ENCODE measurements at regions of chr6 and their contacts with region 1.

Region 1: GRCh38 chr6:100105138-100105753 is 111.2 kb upstream of the MCHR2 start:
- DNase-seq: no peak
- H3K4me3 ChIP-seq: no peak overlapping the region
- H3K27ac ChIP-seq: no peak overlapping the region
- H3K4me1 ChIP-seq: no peaks in the 10 kb centered on the region
- H3K27me3 ChIP-seq: no peaks in the 10 kb centered on the region
- CTCF ChIP-seq: no peak

Region 2: DNA sequence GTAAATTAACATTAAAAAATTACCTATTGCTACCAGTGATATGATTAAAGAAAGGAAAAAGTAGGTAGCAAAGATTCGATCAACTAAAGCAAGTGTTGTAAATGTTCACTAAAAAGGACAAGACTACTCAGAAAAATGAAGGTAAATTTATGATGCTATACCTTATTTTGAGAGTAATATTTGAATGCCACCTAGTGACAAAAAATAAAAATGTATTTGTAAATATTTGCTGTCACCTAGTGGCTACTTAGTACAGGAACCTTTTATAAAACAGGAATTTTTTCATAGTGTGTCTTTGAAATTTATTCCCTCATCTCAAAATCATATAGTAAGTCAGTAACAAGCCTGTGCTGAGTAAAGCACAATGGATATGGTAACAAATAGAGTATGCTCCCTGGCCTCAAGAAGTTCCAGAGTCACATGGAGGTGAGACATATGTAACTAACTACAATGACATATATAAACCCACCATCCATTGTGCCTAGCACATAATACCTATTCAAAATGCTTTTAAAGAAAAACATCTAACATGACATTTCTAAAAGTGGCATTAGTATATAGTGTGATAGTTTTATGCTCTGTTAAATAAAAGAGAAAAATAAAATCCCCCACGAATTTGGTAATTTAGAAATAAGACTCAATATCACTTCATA is 552.6 kb after region 1 on chr6:
- CTCF ChIA-PET with region 1: interaction called, 4 read pairs
- POLR2A ChIA-PET with region 1: no interaction called
- intact Hi-C with region 1: loop called (anchors 2 kb)
- DNase-seq: peak in 1 of 2 experiments; percentile 56
- H3K4me3 ChIP-seq: no peak overlapping the region
- H3K27ac ChIP-seq: no peak overlapping the region
- H3K4me1 ChIP-seq: peaks cover 2% of the 10 kb centered on the region
- H3K27me3 ChIP-seq: no peaks in the 10 kb centered on the region
- CTCF ChIP-seq: peak; percentile 83

Region 3: GRCh38 chr6:100693249-100693927 is 588.1 kb after region 1 on chr6:
- CTCF ChIA-PET with region 1: no interaction called
- POLR2A ChIA-PET with region 1: no interaction called
- intact Hi-C with region 1: no loop called
- DNase-seq: no peak
- H3K4me3 ChIP-seq: no peak overlapping the region
- H3K27ac ChIP-seq: no peak overlapping the region
- H3K4me1 ChIP-seq: no peaks in the 10 kb centered on the region
- H3K27me3 ChIP-seq: no peaks in the 10 kb centered on the region
- CTCF ChIP-seq: no peak

Region 4: GRCh38 chr6:100719883-100720682 is 614.8 kb after region 1 on chr6:
- CTCF ChIA-PET with region 1: interaction called, 24 read pairs
- POLR2A ChIA-PET with region 1: no interaction called
- intact Hi-C with region 1: no loop called
- DNase-seq: no peak
- H3K4me3 ChIP-seq: no peak overlapping the region
- H3K27ac ChIP-seq: no peak overlapping the region
- H3K4me1 ChIP-seq: 0 out of 2 replicates have a peak, but pooled peaks cover 5% of the 10 kb centered on the region
- H3K27me3 ChIP-seq: no peaks in the 10 kb centered on the region
- CTCF ChIP-seq: peak; percentile 75

Measured in PC-9 (cell line).